Body of pancreas (tissue), 4 donors: ENCODE measurements at regions of chr5 and their contacts with region 1.

Region 1: DNA sequence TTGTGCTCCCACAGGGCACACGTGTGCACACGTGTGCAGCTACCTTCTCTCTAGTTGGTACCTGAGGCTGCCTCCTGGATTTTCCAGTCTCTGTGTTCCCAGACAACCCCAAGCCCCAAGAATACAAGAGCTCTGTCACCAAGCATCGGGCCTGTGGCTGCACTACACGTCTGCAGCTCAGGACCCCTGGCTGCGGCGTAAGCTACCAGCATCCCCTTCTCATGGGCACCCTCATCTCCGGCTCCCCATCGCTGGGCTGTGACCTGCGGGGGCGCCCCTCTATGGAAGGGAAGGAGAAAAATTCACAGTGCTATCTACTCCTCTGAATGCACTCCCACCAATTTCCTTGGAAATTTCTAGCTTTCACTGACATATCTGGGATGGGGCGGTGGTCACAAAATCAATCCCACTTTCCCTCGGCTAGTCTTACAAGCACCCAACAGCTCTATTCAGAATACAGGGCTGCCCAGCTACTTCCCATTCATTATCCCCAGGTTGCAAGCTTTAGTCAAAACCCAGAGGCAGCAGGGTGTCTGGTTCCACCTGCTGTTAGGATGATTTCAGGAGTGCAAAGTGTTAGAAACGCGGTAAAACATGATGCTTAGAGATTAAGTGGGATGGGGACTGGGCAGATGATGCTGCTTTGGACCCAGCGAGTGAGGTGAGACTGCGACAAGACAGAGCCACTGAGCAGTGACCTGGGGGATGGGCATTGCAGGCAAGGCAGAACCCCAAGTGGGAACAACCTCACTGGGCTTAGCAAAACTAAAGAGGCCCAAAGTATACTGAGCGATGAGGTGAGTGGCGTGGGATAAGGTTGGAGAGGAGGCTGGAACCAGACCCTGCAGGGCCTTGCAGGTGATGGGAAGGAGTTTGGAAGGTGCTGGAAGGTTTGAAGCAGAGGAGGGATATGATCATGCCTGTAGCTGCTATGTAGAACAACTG is 121.7 kb downstream of the KCNIP1 start:
- DNase-seq: no peak
- ATAC-seq: no peak
- H3K4me3 ChIP-seq: no peak overlapping the region
- H3K27ac ChIP-seq: no peak overlapping the region
- H3K4me1 ChIP-seq: no peaks in the 10 kb centered on the region
- H3K27me3 ChIP-seq: no peaks in the 10 kb centered on the region
- CTCF ChIP-seq: no peak
- POLR2A ChIP-seq: no peak

Region 2: GRCh38 chr5:170434966-170435605 is 190.4 kb before region 1 on chr5:
- intact Hi-C with region 1: loop called (anchors 5 kb)
- DNase-seq: peak; percentile 61 to 70 (median 64)
- ATAC-seq: peak; percentile 77
- H3K4me3 ChIP-seq: no peak overlapping the region
- H3K27ac ChIP-seq: no peak overlapping the region
- H3K4me1 ChIP-seq: no peaks in the 10 kb centered on the region
- H3K27me3 ChIP-seq: no peaks in the 10 kb centered on the region
- CTCF ChIP-seq: peak; percentile 89 to 96 (median 92)
- POLR2A ChIP-seq: no peak

Region 3: GRCh38 chr5:170662966-170663365 is 37.5 kb after region 1 on chr5:
- intact Hi-C with region 1: no loop called
- DNase-seq: no peak
- ATAC-seq: no peak
- H3K4me3 ChIP-seq: no peak overlapping the region
- H3K27ac ChIP-seq: no peak overlapping the region
- H3K4me1 ChIP-seq: no peaks in the 10 kb centered on the region
- H3K27me3 ChIP-seq: no peaks in the 10 kb centered on the region
- CTCF ChIP-seq: no peak
- POLR2A ChIP-seq: no peak